Psoas muscle (tissue), 8 donors: ENCODE measurements at regions of chr11 and their contacts with region 1.

Region 1: GRCh38 chr11:3849297-3849874 is 6.1 kb upstream of the STIM1 start:
- DNase-seq: no peak
- ATAC-seq: peak in 3 of 4 donors; percentile 44 to 60 (median 53)
- H3K4me3 ChIP-seq: no peak overlapping the region
- H3K27ac ChIP-seq: no peak overlapping the region
- H3K4me1 ChIP-seq: peaks cover 12% of the 10 kb centered on the region
- H3K27me3 ChIP-seq: no peaks in the 10 kb centered on the region
- CTCF ChIP-seq: peak; percentile 64

Region 2: DNA sequence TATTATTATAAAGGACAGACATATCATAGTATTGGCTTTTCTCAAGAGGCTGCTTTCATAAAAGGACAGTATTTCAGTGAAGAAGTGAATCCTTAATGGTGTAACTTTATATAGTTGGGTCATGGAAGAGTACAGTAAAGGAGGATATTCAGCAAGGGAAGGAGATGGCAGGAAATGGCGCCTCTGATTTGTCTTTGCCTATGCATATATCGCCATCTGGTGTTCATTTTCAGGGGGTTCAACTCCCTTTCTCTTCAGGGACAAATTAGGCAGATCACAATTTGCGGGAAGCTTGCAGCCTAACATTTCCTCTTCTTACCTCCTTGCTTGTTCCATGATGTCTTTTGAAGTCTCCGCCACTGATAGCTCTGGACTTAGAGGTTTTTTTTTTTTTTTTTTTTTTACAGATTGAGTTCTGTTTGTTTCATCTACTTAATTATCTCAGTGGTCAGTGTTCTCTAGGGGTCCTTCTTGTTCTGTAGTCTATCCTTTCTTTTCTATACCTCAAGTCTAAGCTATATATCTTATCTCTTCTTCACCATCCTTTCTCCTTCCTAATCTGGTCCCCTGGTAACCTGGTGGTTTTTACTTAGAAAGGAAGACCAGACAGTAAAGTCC is 223.4 kb after region 1 on chr11:
- intact Hi-C with region 1: loop called (anchors 1 to 2 kb)
- DNase-seq: no peak
- ATAC-seq: peak; percentile 72 to 84 (median 76)
- H3K4me3 ChIP-seq: no peak overlapping the region
- H3K27ac ChIP-seq: peak overlapping the region; percentile 63
- H3K4me1 ChIP-seq: peaks cover 32% of the 10 kb centered on the region
- H3K27me3 ChIP-seq: no peaks in the 10 kb centered on the region
- CTCF ChIP-seq: peak; percentile 86